B cell (primary cell): ENCODE measurements at regions of chr1 and their contacts with region 1.

Region 1: DNA sequence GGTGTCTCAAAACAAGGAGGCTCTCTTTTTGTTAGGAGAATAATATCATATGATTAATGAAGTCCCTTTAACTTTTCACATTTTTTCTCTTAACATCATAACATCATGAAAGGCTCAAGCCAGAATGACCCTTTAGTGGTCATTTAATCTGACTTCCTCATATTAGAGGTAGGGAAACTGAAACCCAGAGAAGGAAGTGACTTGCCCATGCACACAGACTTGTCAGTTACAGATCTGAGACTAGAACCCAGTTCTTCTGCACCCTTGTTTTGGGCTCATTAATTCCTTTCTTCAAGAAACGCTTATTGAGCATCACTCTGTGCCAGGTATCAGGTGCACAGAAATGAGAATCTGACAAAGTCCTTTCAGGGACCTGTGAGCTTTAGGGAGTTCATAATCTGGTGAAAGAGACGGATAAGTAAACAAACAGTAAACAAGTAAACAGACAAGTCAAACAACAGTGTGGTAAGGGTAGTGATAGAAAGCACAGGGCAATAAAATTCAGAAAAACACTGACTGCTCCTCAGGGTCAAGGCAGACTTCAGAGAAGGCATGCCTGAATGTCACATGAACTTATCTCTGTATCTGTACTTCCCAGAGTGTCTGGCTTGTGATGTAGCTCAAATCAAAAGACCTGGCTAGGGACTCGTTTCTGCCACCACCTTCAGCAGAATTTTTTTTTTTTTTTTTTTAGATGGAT is 38.4 kb upstream of the OSBPL9 start:
- DNase-seq: peak; percentile 47
- ATAC-seq: peak; percentile 67
- H3K4me3 ChIP-seq: no peak overlapping the region
- H3K4me3 Mint-ChIP-seq: peak overlapping the region; percentile 17
- H3K27ac ChIP-seq: peak overlapping the region; percentile 26 to 35
- H3K27ac Mint-ChIP-seq: peak overlapping the region; percentile 51
- H3K4me1 ChIP-seq: peaks cover 36 to 39% of the 10 kb centered on the region in 2 donors
- H3K4me1 Mint-ChIP-seq: peaks cover 49% of the 10 kb centered on the region
- H3K27me3 ChIP-seq: no peaks in the 10 kb centered on the region
- H3K27me3 Mint-ChIP-seq: no peaks in the 10 kb centered on the region
- CTCF ChIP-seq: no peak

Region 2: GRCh38 chr1:50697440-50698421 is 880.8 kb before region 1 on chr1:
- CTCF ChIA-PET with region 1: no interaction called
- POLR2A ChIA-PET with region 1: no interaction called
- intact Hi-C with region 1: no loop called
- DNase-seq: no peak
- ATAC-seq: no peak
- H3K4me3 ChIP-seq: no peak overlapping the region
- H3K4me3 Mint-ChIP-seq: no peak overlapping the region
- H3K27ac ChIP-seq: no peak overlapping the region
- H3K27ac Mint-ChIP-seq: no peak overlapping the region
- H3K4me1 ChIP-seq: no peaks in the 10 kb centered on the region
- H3K4me1 Mint-ChIP-seq: no peaks in the 10 kb centered on the region
- H3K27me3 ChIP-seq: no peaks in the 10 kb centered on the region
- H3K27me3 Mint-ChIP-seq: no peaks in the 10 kb centered on the region
- CTCF ChIP-seq: no peak

Region 3: GRCh38 chr1:51453010-51453409 is 125.5 kb before region 1 on chr1:
- CTCF ChIA-PET with region 1: no interaction called
- POLR2A ChIA-PET with region 1: interaction called, 19 read pairs
- intact Hi-C with region 1: no loop called
- DNase-seq: no peak
- ATAC-seq: no peak
- H3K4me3 ChIP-seq: no peak overlapping the region
- H3K4me3 Mint-ChIP-seq: no peak overlapping the region
- H3K27ac ChIP-seq: no peak overlapping the region
- H3K27ac Mint-ChIP-seq: no peak overlapping the region
- H3K4me1 ChIP-seq: no peaks in the 10 kb centered on the region
- H3K4me1 Mint-ChIP-seq: peaks cover 4% of the 10 kb centered on the region
- H3K27me3 ChIP-seq: no peaks in the 10 kb centered on the region
- H3K27me3 Mint-ChIP-seq: no peaks in the 10 kb centered on the region
- CTCF ChIP-seq: no peak

Region 4: GRCh38 chr1:51497340-51497739 is 81.2 kb before region 1 on chr1:
- CTCF ChIA-PET with region 1: no interaction called
- POLR2A ChIA-PET with region 1: no interaction called
- intact Hi-C with region 1: loop called (anchors 5 kb)
- DNase-seq: no peak
- ATAC-seq: no peak
- H3K4me3 ChIP-seq: no peak overlapping the region
- H3K4me3 Mint-ChIP-seq: no peak overlapping the region
- H3K27ac ChIP-seq: no peak overlapping the region
- H3K27ac Mint-ChIP-seq: no peak overlapping the region
- H3K4me1 ChIP-seq: peaks cover 43 to 65% of the 10 kb centered on the region in 2 donors
- H3K4me1 Mint-ChIP-seq: peaks cover 78% of the 10 kb centered on the region
- H3K27me3 ChIP-seq: no peaks in the 10 kb centered on the region
- H3K27me3 Mint-ChIP-seq: no peaks in the 10 kb centered on the region
- CTCF ChIP-seq: no peak

Region 5: DNA sequence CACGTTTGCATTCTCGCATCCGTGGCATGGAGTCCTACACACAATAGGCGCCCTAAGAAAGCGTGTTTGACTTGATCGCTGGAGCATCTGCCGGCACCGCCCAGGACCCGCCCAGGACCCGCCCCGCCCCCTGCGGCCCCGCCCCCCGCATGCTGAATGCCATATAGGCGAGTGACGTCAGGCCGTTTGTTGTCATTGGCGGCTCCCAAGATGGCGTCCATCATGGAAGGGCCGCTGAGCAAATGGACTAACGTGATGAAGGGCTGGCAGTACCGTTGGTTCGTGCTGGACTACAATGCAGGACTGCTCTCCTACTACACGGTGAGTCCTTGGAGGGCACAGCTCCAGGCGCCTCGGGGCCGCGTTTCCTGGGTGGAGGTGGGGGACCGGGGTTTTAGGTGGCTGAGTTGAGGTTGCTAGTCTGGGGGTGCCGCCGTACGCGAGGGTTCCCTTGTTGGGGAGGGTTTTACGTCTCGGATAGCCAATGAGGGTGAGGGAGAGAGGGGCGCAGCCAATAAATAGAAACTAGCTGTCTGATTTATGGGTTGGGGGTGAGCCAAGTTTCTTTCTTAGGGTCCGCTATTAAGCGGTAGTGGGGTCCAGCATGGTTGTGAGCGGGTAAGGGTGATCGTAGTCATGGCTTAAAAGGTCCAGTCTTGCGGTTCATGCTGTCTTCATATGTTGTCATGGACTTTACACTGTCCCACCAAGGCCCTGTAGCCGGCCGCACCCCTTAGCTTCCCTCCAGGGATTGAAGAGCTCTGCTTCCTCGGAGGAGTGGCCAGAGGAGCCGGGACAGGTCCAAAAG is 38.6 kb after region 1 on chr1 and contains the start of gene OSBPL9:
- CTCF ChIA-PET with region 1: no interaction called
- POLR2A ChIA-PET with region 1: interaction called, 4 read pairs
- intact Hi-C with region 1: loop called (anchors 5 kb)
- DNase-seq: peak; percentile 92
- ATAC-seq: peak; percentile 98
- H3K4me3 ChIP-seq: peak within 1 kb of the TSS; percentile 87 to 93 (median 90)
- H3K4me3 Mint-ChIP-seq: peak within 1 kb of the TSS; percentile 100
- H3K27ac ChIP-seq: peak within 1 kb of the TSS; percentile 65 to 85
- H3K27ac Mint-ChIP-seq: peak within 1 kb of the TSS; percentile 99
- H3K4me1 ChIP-seq: peaks cover 11 to 19% of the 10 kb centered on the region in 2 donors
- H3K4me1 Mint-ChIP-seq: peaks cover 32% of the 10 kb centered on the region
- H3K27me3 ChIP-seq: no peaks in the 10 kb centered on the region
- H3K27me3 Mint-ChIP-seq: no peaks in the 10 kb centered on the region
- CTCF ChIP-seq: no peak
- total RNA-seq, gene OSBPL9: 59.6 and 63.8 TPM in 2 replicates

Region 6: DNA sequence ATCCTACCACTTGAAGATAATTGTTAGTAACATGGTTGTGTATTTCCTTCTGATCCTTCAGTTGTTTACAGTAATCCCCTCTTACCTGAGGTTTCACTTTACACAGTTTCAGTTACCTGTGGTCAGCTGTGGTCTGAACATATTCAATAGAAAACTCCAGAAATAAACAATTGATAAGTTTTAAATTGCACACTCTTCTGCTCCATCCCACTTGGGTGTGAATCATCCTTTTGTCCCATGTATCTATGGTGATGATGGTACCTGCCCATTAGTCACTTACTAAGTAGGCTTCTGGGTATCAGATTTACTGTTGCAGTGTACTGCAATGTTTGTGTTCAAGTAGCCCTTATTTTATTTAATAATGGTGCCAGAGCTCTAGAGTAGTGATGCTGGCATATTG is 100.9 kb after region 1 on chr1:
- CTCF ChIA-PET with region 1: no interaction called
- POLR2A ChIA-PET with region 1: no interaction called
- intact Hi-C with region 1: no loop called
- DNase-seq: no peak
- ATAC-seq: no peak
- H3K4me3 ChIP-seq: no peak overlapping the region
- H3K4me3 Mint-ChIP-seq: no peak overlapping the region
- H3K27ac ChIP-seq: no peak overlapping the region
- H3K27ac Mint-ChIP-seq: no peak overlapping the region
- H3K4me1 ChIP-seq: no peaks in the 10 kb centered on the region
- H3K4me1 Mint-ChIP-seq: peaks cover 3% of the 10 kb centered on the region
- H3K27me3 ChIP-seq: no peaks in the 10 kb centered on the region
- H3K27me3 Mint-ChIP-seq: no peaks in the 10 kb centered on the region
- CTCF ChIP-seq: no peak